HCT116 (cell line): ENCODE measurements at regions of chr9 and their contacts with region 1.

Region 1: DNA sequence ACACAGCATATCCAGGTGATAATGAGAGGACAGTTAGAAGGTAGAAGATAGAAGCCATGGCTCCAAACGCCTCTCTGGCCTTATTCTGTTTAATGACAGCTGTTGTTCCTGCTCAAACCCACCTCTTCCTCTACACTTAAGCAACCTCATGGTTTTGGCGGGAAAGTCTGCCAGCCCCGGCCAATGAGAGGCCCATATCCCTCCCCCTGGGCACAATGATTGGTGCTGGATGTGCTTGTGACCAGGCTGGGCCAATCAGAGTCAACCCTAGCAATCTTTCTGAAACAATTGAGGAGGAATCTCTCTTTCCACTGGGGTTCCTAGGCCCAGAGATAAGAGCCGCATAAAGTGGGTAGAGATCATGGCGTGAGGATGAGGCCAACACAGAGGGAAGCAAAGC is 4.8 kb upstream of the GFI1B start:
- DNase-seq: peak; percentile 8
- ATAC-seq: no peak
- H3K4me3 ChIP-seq: no peak overlapping the region
- H3K27ac ChIP-seq: no peak overlapping the region
- H3K4me1 ChIP-seq: peaks cover 0 to 11% of the 10 kb centered on the region in 2 experiments; a peak in 2 of 4 replicates
- H3K27me3 ChIP-seq: peaks cover 18% of the 10 kb centered on the region; the same call in 1 of the 2 replicates
- CTCF ChIP-seq: no peak
- POLR2A ChIP-seq: no peak
- RAD21 ChIP-seq: no peak

Region 2: DNA sequence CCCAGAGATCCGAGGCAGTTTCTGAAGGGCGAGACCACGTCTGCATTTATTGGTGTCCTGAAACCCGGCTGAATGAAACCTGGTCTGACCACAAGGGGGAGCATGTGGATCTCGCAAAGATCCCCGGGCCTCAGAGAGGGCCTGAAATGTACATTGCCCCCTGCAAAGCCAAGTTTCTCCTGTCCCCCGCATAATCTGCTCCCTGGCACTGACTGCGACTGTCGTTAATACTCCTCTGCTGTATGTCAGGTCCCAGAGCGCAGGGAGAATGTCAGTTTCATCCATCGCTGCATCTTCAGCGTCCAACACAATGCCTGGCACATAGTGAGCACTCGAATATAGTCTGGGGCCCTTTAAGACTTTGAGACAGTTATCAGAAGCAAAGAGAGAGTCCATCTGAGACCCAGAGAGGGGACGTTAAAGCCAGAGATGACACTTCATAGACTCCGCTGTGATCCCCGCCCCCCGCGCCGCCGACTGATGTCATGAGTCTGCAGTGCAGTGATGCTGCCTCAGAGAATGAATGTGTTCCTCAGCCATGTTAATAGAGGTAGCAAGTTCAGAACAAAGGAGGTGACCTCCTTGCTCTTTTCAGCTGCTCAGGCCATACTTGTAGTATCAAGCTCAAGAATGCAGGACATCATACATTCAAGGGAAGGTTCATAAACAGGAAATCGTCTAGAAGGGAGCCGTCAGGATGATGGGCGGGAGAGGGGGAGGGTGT is 465.8 kb before region 1 on chr9:
- CTCF ChIA-PET with region 1: no interaction called
- POLR2A ChIA-PET with region 1: no interaction called
- RAD21 ChIA-PET with region 1: no interaction called
- intact Hi-C with region 1: loop called (anchors 5 kb)
- DNase-seq: peak; percentile 37
- ATAC-seq: peak; percentile 96
- H3K4me3 ChIP-seq: no peak overlapping the region
- H3K27ac ChIP-seq: no peak overlapping the region
- H3K4me1 ChIP-seq: no peaks in the 10 kb centered on the region
- H3K27me3 ChIP-seq: no peaks in the 10 kb centered on the region; the same call in 1 of the 2 replicates
- CTCF ChIP-seq: peak; percentile 83 to 84 (median 84); a peak in 5 of 6 replicates
- POLR2A ChIP-seq: no peak
- RAD21 ChIP-seq: peak; percentile 82

Region 3: GRCh38 chr9:132651254-132651653 is 322.5 kb before region 1 on chr9:
- CTCF ChIA-PET with region 1: no interaction called
- POLR2A ChIA-PET with region 1: no interaction called
- RAD21 ChIA-PET with region 1: no interaction called
- intact Hi-C with region 1: loop called (anchors 10 kb)
- DNase-seq: no peak
- ATAC-seq: peak; percentile 44; the same call in 1 of the 2 replicates
- H3K4me3 ChIP-seq: no peak overlapping the region
- H3K27ac ChIP-seq: no peak overlapping the region
- H3K4me1 ChIP-seq: no peaks in the 10 kb centered on the region
- H3K27me3 ChIP-seq: no peaks in the 10 kb centered on the region
- CTCF ChIP-seq: peak; percentile 22 to 52 (median 52); a peak in 4 of 6 replicates
- POLR2A ChIP-seq: no peak
- RAD21 ChIP-seq: 0 out of 2 replicates have a peak, but pooled peaks have one; percentile 23

Region 4: DNA sequence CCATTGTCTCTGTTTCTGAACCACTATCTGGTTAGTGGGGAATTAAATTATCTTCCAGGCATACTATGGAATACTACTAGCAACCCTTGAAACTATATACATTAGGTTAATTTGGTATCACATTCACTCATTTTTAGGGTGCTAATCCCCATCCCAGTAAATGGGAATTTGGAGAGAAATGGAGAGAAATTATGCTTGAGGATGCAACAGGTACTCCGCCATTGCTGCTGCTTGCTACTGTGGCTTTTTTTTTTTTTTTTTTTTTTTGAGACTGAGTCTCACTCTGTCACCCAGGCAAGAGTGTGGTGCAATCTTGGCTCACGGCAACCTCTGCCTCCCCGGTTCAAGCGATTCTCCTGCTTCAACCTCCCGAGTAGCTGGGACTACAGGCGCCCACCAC is 161.7 kb before region 1 on chr9:
- CTCF ChIA-PET with region 1: no interaction called
- POLR2A ChIA-PET with region 1: no interaction called
- RAD21 ChIA-PET with region 1: no interaction called
- intact Hi-C with region 1: loop called (anchors 1 kb)
- DNase-seq: no peak
- ATAC-seq: no peak
- H3K4me3 ChIP-seq: no peak overlapping the region
- H3K27ac ChIP-seq: no peak overlapping the region
- H3K4me1 ChIP-seq: peaks cover 0 to 9% of the 10 kb centered on the region in 2 experiments; a peak in 1 of 4 replicates
- H3K27me3 ChIP-seq: peaks cover 7% of the 10 kb centered on the region; the same call in 1 of the 2 replicates
- CTCF ChIP-seq: no peak
- POLR2A ChIP-seq: no peak
- RAD21 ChIP-seq: no peak